ENCODE measurements at regions of chr3 and their contacts with region 1.

Region 1: DNA sequence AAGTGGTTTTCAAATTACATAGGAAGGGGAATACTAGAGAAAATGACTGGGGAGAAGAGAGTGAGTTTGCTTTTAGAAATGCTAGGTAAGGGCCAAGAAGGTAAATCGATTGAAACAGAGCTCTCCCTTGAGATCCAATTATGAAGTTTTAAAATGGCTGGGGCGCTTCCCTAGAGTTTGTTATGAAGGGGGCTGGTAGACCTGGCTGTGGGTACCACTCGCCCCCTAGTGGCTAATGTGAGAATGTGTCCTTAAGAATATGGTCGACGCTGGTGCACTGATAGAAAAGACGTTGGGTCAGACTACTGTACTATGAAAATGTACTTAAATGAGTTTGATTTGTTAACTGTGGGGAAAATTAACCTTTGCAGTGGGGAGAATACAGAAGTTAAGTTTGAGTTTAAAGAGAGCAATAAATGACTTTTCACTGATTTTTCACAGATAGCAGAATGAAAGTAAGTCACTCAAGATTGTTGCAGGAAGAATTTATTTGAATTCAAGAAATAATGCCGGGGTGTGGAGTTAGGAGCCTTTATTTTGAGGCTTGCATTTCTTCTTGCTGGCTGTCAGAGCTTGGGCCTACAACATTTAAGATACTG is 9.2 kb downstream of the TMPRSS7 start:
- DNase-seq: peak; percentile 70
- ATAC-seq: peak; percentile 93
- H3K4me3 Mint-ChIP-seq: no peak overlapping the region
- H3K27ac Mint-ChIP-seq: no peak overlapping the region
- H3K4me1 Mint-ChIP-seq: peaks cover 3% of the 10 kb centered on the region
- H3K27me3 Mint-ChIP-seq: peaks cover 1% of the 10 kb centered on the region

Region 2: GRCh38 chr3:111989061-111989678 is 54.5 kb before region 1 on chr3:
- CTCF ChIA-PET with region 1: interaction called, 12 read pairs
- POLR2A ChIA-PET with region 1: no interaction called
- DNase-seq: no peak
- ATAC-seq: peak; percentile 88
- H3K4me3 Mint-ChIP-seq: no peak overlapping the region
- H3K27ac Mint-ChIP-seq: no peak overlapping the region
- H3K4me1 Mint-ChIP-seq: peaks cover 28% of the 10 kb centered on the region
- H3K27me3 Mint-ChIP-seq: no peaks in the 10 kb centered on the region

Region 3: GRCh38 chr3:112032098-112032731 is 11.5 kb before region 1 on chr3:
- CTCF ChIA-PET with region 1: interaction called, 14 read pairs
- POLR2A ChIA-PET with region 1: no interaction called
- DNase-seq: no peak
- ATAC-seq: no peak
- H3K4me3 Mint-ChIP-seq: no peak overlapping the region
- H3K27ac Mint-ChIP-seq: no peak overlapping the region
- H3K4me1 Mint-ChIP-seq: no peaks in the 10 kb centered on the region
- H3K27me3 Mint-ChIP-seq: no peaks in the 10 kb centered on the region

Region 4: DNA sequence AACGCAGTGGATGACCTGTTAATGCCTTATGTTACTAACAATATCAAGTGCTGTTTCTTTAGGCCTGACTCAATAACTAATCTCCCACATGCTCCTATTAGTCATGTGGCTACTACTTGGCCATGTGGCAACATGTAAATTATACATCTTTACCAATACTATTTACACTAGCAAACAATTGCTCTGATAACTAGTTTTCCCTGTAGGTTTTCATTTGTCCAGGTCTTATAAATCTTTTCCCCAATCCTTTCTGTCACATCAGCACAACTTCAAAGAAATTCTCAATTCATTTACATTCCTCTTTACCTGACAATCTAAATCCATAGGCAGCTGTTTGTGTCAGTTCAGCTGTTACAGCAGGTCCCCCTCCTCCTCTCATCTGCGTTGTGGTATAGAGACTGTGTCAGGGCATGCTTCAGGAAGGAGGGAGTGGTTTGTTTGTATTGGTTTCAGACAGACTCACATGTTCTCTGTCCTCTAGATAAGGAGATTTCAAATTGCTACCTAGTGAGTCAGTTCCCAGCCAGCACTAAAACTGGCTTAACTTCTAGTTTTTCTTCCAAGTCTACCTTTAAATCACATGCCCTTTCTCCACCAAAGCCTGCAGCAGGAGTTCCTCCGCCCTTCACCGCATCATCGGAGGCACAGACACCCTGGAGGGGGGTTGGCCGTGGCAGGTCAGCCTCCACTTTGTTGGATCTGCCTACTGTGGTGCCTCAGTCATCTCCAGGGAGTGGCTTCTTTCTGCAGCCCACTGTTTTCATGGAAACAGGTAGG is 31.2 kb after region 1 on chr3:
- CTCF ChIA-PET with region 1: interaction called, 10 read pairs
- POLR2A ChIA-PET with region 1: no interaction called
- DNase-seq: peak; percentile 51
- ATAC-seq: peak; percentile 91
- H3K4me3 Mint-ChIP-seq: peak overlapping the region; percentile 33
- H3K27ac Mint-ChIP-seq: peak overlapping the region; percentile 11
- H3K4me1 Mint-ChIP-seq: peaks cover 42% of the 10 kb centered on the region
- H3K27me3 Mint-ChIP-seq: peaks cover 4% of the 10 kb centered on the region

Measured in activated CD8-positive, alpha-beta T cell treated with anti-CD3 and anti-CD28 coated beads, Interleukin-2, amount 10 ng/mL, durations not matched to agents 7 days and 5 days (primary cell).